Motor neuron (in vitro differentiated cells): ENCODE measurements at regions of chr11 and their contacts with region 1.

Region 1: GRCh38 chr11:12680246-12680939 is 6.2 kb downstream of the TEAD1 start:
- ATAC-seq: peak; percentile 73 to 92 (median 90)
- H3K4me3 ChIP-seq: peak overlapping the region in 4 of 5 donors; percentile 12 to 17 (median 16)
- H3K27ac ChIP-seq: no peak overlapping the region
- H3K4me1 ChIP-seq: peaks cover 54 to 61% of the 10 kb centered on the region in 2 donors

Region 2: DNA sequence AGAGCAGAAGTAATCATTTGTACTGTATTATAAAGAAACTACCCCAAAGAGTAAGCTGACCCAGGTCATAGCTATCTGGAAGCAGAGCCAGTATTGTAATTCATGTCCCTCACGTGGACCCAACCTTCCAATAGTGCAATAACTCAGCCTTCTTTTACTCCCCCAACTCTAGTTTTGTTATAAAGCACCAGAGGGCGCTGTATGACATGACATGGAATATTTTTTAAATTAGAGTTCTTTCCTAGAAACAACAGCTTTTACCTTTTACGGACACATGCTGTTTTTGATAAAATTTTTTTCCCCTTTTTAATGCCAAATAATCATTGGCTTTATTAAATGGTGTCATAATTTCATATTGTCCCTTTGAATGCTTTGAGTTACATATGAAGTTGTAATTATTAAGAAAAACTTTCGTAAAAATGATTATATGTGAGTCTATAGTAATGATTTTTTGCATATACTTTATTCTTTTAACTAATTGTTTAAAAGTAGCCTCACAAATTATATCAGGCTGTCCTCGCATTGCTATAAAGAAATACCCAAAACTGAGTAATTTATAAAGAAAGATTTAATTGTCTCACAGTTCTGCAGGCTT is 748.8 kb before region 1 on chr11:
- in situ Hi-C with region 1: no loop called
- ATAC-seq: peak in 5 of 8 experiments; percentile 43 to 88 (median 72)
- H3K4me3 ChIP-seq: no peak overlapping the region
- H3K27ac ChIP-seq: no peak overlapping the region
- H3K4me1 ChIP-seq: no peaks in the 10 kb centered on the region

Region 3: GRCh38 chr11:12862696-12863469 is 182.5 kb after region 1 on chr11:
- in situ Hi-C with region 1: loop called in 1 of 9 experiments (anchors 25 kb)
- ATAC-seq: peak; percentile 54 to 83 (median 71)
- H3K4me3 ChIP-seq: peak overlapping the region in 1 of 5 donors; percentile 7
- H3K27ac ChIP-seq: peak overlapping the region in 1 of 2 donors; percentile 11
- H3K4me1 ChIP-seq: peaks cover 40 to 41% of the 10 kb centered on the region in 2 donors